ENCODE measurements at regions of chr11 and their contacts with region 1.

Region 1: DNA sequence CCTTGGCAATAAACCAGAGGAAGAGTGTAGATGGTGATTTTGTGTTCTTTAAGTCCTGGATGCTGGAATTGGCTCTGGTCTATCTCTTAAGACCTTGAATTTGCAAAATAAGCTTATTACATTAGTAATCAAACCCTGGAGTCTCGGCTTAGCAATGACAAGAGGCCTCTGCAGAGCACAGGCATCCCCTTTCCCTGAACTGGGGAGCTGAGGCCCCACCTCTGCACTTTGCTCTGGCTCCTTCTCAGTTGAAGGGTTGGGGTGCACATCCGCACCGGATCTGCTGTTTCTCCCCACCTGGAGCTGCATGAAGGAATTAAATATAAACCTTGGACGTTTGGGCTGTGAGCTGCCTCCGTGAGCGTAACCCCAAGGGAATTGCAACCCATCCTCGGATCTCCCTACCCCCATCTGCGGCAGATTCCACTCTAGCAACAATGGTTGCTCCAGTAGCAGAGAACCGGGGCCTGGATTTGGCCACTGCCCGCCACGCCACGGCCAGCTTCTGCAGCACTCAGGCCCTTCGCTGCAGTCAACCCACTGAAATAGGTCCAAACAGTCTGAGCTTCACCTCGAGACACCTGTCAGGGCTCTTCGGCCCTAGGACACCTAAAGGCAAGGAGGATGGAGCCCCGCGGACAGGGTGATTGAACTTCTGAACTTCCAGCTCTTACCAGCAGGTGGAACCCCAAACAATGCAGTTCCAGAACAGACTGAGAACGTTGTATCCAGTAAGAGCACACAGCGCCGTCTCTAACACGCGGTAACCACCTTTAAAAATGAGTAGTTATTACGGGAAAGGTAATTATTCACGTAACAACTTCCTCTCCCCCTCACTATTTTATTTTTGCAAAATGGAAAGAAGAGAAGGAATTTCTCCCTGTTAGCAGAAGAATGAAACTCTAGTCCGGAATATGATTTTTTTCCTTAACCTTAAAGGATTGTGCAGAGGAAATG is 54.8 kb upstream of the CAPRIN1 start:
- DNase-seq: no peak
- ATAC-seq: peak; percentile 94

Region 2: DNA sequence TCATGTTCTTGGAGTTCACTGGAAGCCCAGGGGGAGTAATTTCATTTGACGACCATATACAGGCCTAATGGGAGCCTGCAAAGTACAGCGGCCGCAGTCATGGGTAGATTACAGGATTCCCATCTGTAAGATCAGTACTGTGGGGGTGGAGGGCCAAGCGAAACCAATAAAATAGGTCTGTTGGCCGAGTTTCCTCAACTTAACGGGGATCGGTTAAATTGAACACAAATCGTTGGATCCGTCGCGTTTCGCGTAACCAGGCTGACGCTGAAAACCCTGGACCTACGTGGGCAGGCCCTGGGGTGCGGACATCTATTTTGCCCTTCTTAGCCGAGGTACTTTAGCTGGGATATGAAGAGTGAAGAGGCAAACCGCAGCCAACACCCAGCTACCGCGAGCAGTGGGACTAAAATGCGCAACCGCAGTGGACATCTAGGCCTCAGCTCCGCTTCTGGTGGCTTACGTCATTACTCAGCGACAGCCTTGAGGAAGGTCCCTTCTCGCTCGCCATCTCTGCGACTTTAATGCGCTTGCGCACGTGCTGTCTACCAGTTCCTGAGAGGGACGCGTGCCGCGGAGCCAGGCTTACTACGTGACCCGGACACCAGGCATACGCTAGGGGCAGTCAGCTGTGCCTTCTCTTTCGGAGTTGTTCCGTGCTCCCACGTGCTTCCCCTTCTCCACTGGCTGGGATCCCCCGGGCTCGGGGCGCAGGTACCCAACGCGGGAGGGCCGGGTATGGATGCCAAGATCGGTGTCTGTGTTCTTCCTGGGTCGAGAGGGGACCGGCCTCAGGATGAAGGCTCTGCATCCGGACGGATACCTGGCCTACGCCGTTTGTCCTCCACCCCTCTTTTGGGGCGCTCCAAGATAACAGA is 108.5 kb after region 1 on chr11 and contains the start of gene NAT10:
- intact Hi-C with region 1: loop called (anchors 2 kb)
- DNase-seq: peak; percentile 98
- ATAC-seq: peak; percentile 98
- total RNA-seq, gene NAT10: 22.8 TPM